ENCODE measurements at regions of chr12 and their contacts with region 1.

Region 1: GRCh38 chr12:112843287-112843686 is 51.7 kb downstream of the RPH3A start:
- DNase-seq: peak in 1 of 2 experiments; percentile 30
- ATAC-seq: no peak
- H3K4me3 ChIP-seq: no peak overlapping the region
- H3K27ac ChIP-seq: peak overlapping the region; percentile 90 to 95
- H3K4me1 ChIP-seq: peaks cover 49% of the 10 kb centered on the region
- CTCF ChIP-seq: no peak
- EP300 ChIP-seq: no peak
- POLR2A ChIP-seq: no peak
- RAD21 ChIP-seq: no peak

Region 2: GRCh38 chr12:112855375-112855774 is 12.1 kb after region 1 on chr12:
- CTCF ChIA-PET with region 1: interaction called, 17 read pairs
- POLR2A ChIA-PET with region 1: no interaction called
- DNase-seq: peak; percentile 66 to 78
- ATAC-seq: peak; percentile 88 to 92; a peak in 5 of 6 replicates
- H3K4me3 ChIP-seq: no peak overlapping the region
- H3K27ac ChIP-seq: peak overlapping the region; percentile 25 to 30; a peak in 4 of 6 replicates
- H3K4me1 ChIP-seq: peaks cover 29% of the 10 kb centered on the region
- CTCF ChIP-seq: peak; percentile 45
- EP300 ChIP-seq: no peak
- POLR2A ChIP-seq: no peak
- RAD21 ChIP-seq: peak; percentile 61 to 62

Region 3: GRCh38 chr12:113040722-113041171 is 197.5 kb after region 1 on chr12:
- CTCF ChIA-PET with region 1: no interaction called
- POLR2A ChIA-PET with region 1: no interaction called
- DNase-seq: peak; percentile 39 to 82
- ATAC-seq: peak; percentile 78 to 87
- H3K4me3 ChIP-seq: no peak overlapping the region
- H3K27ac ChIP-seq: peak overlapping the region; percentile 46 to 66; a peak in 4 of 6 replicates
- H3K4me1 ChIP-seq: peaks cover 11% of the 10 kb centered on the region
- CTCF ChIP-seq: no peak
- EP300 ChIP-seq: no peak
- POLR2A ChIP-seq: no peak
- RAD21 ChIP-seq: no peak

Measured in A549 (cell line).